Mammary epithelial cell (primary cell): ENCODE measurements at regions of chr10 and their contacts with region 1.

Region 1: GRCh38 chr10:94963901-94964300 is 25.4 kb downstream of the CYP2C9 start:
- DNase-seq: peak; percentile 18
- H3K4me3 ChIP-seq: no peak overlapping the region
- H3K27ac ChIP-seq: no peak overlapping the region
- H3K4me1 ChIP-seq: no peaks in the 10 kb centered on the region
- H3K27me3 ChIP-seq: no peaks in the 10 kb centered on the region
- CTCF ChIP-seq: peak; percentile 71 to 82

Region 2: GRCh38 chr10:94623572-94623971 is 340.3 kb before region 1 on chr10:
- CTCF ChIA-PET with region 1: no interaction called
- dilution Hi-C with region 1: no loop called
- in situ Hi-C with region 1: no loop called
- intact Hi-C with region 1: loop called (anchors 10 kb)
- DNase-seq: no peak
- H3K4me3 ChIP-seq: no peak overlapping the region
- H3K27ac ChIP-seq: no peak overlapping the region
- H3K4me1 ChIP-seq: no peaks in the 10 kb centered on the region
- H3K27me3 ChIP-seq: no peaks in the 10 kb centered on the region
- CTCF ChIP-seq: no peak

Region 3: DNA sequence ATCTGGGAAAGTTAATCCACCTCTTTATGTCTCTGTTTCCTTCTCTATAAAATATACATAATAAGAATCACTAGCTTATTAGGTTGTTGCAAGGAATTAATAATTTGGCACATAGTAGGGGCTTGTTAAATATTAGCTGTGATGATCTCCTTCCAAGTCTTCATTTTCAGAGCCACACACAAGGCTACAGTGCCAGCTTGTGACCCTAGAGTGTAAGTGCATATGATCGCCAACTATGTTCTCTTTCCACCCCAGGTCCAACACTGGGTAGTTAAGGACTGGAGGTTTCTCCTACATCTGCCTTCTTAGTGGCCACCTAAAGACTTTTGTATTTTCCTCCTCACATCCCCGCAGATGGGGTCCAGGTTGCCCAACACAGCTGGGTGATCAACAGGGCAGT is 212.2 kb after region 1 on chr10:
- CTCF ChIA-PET with region 1: no interaction called
- dilution Hi-C with region 1: no loop called
- in situ Hi-C with region 1: no loop called
- intact Hi-C with region 1: loop called (anchors 10 kb)
- DNase-seq: no peak
- H3K4me3 ChIP-seq: no peak overlapping the region
- H3K27ac ChIP-seq: no peak overlapping the region
- H3K4me1 ChIP-seq: peaks cover 5% of the 10 kb centered on the region
- H3K27me3 ChIP-seq: no peaks in the 10 kb centered on the region
- CTCF ChIP-seq: peak; percentile 23 to 47